Caco-2 (cell line): ENCODE measurements at regions of chr6 and their contacts with region 1.

Region 1: GRCh38 chr6:26537846-26538571 is at the start of gene HMGN4:
- DNase-seq: peak; percentile 85 to 90
- H3K4me3 ChIP-seq: peak within 1 kb of the TSS; percentile 65
- H3K4me3 Mint-ChIP-seq: peak within 1 kb of the TSS; percentile 89
- H3K27ac Mint-ChIP-seq: peak within 1 kb of the TSS; percentile 97
- H3K4me1 ChIP-seq: peaks cover 4% of the 10 kb centered on the region; the same call in 1 of the 2 replicates
- H3K4me1 Mint-ChIP-seq: peaks cover 15% of the 10 kb centered on the region
- H3K27me3 ChIP-seq: no peaks in the 10 kb centered on the region
- H3K27me3 Mint-ChIP-seq: peaks cover 2% of the 10 kb centered on the region
- CTCF ChIP-seq: no peak
- total RNA-seq, gene HMGN4: 29.6 and 30.8 TPM in 2 replicates

Region 2: DNA sequence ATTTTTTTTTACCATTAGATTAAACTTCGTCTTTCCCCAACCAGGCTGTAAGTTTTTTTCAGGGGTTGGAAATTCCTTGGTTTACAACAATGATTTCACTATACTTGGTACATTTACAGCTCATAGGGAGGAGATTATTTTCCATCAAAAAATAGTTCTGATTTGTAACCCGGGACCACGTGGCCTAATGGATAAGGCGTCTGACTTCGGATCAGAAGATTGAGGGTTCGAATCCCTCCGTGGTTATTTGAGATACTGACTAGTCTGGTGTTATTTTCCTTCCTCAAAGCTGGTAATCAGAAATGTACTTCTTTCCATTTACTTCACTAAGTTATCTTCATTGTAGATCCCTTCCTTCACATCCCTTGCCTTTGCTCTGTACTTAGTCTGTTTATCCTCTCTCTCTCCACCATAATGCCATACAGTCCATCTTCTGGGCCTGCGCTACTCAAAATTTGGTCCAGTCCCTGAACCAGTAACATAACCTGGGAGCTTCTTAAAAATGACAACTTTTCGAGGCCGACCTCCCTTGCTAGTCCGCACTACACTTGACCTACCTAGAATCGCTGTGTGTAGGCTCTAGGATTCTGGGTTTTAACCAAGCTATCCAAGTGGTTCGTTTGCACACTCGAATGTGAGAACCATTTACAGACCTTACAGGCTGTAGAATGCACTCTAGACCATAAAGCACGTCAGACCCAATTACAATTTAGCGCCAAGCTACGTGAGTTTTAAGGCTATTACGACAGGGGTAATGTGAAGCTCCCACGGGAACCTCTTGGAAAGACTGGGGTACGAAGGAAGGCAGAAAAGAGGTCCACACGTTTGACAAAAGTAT is 215.1 kb before region 1 on chr6:
- CTCF ChIA-PET with region 1: interaction called, 3 read pairs
- POLR2A ChIA-PET with region 1: no interaction called
- intact Hi-C with region 1: loop called (anchors 10 kb)
- DNase-seq: peak; percentile 72 to 87
- H3K4me3 ChIP-seq: peak overlapping the region; percentile 70
- H3K4me3 Mint-ChIP-seq: peak overlapping the region; percentile 57
- H3K27ac Mint-ChIP-seq: peak overlapping the region; percentile 39
- H3K4me1 ChIP-seq: 0 out of 2 replicates have a peak, but pooled peaks cover 7% of the 10 kb centered on the region
- H3K4me1 Mint-ChIP-seq: peaks cover 26% of the 10 kb centered on the region
- H3K27me3 ChIP-seq: no peaks in the 10 kb centered on the region
- H3K27me3 Mint-ChIP-seq: no peaks in the 10 kb centered on the region
- CTCF ChIP-seq: no peak

Region 3: DNA sequence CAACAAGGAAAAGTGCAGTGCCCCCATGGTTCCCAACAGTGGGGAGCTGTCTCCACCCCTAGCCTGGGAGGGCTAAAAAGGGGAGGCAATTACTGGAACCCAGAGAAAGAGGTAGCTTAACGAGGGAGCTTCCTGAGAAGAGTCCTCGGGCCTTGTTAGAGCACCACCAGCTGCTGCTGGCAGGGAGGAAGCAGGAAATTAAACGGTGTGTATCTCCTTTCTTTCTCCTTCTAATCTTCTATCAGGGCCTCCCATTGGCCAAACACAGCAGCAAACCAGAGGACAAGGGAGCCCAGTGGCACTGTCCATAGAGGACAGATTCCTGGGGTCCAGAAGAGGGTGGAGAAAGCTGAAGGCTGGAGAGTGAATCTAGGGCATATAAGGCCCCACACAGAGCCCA is 162.7 kb before region 1 on chr6:
- CTCF ChIA-PET with region 1: no interaction called
- POLR2A ChIA-PET with region 1: interaction called, 14 read pairs
- intact Hi-C with region 1: no loop called
- DNase-seq: no peak
- H3K4me3 ChIP-seq: no peak overlapping the region
- H3K4me3 Mint-ChIP-seq: no peak overlapping the region
- H3K27ac Mint-ChIP-seq: no peak overlapping the region
- H3K4me1 ChIP-seq: no peaks in the 10 kb centered on the region
- H3K4me1 Mint-ChIP-seq: no peaks in the 10 kb centered on the region
- H3K27me3 ChIP-seq: no peaks in the 10 kb centered on the region
- H3K27me3 Mint-ChIP-seq: no peaks in the 10 kb centered on the region
- CTCF ChIP-seq: no peak

Region 4: GRCh38 chr6:26507658-26508057 is 30.4 kb before region 1 on chr6:
- CTCF ChIA-PET with region 1: no interaction called
- POLR2A ChIA-PET with region 1: no interaction called
- intact Hi-C with region 1: no loop called
- DNase-seq: no peak
- H3K4me3 ChIP-seq: no peak overlapping the region
- H3K4me3 Mint-ChIP-seq: no peak overlapping the region
- H3K27ac Mint-ChIP-seq: no peak overlapping the region
- H3K4me1 ChIP-seq: peaks cover 4% of the 10 kb centered on the region
- H3K4me1 Mint-ChIP-seq: peaks cover 17% of the 10 kb centered on the region
- H3K27me3 ChIP-seq: no peaks in the 10 kb centered on the region
- H3K27me3 Mint-ChIP-seq: no peaks in the 10 kb centered on the region
- CTCF ChIP-seq: no peak

Region 5: DNA sequence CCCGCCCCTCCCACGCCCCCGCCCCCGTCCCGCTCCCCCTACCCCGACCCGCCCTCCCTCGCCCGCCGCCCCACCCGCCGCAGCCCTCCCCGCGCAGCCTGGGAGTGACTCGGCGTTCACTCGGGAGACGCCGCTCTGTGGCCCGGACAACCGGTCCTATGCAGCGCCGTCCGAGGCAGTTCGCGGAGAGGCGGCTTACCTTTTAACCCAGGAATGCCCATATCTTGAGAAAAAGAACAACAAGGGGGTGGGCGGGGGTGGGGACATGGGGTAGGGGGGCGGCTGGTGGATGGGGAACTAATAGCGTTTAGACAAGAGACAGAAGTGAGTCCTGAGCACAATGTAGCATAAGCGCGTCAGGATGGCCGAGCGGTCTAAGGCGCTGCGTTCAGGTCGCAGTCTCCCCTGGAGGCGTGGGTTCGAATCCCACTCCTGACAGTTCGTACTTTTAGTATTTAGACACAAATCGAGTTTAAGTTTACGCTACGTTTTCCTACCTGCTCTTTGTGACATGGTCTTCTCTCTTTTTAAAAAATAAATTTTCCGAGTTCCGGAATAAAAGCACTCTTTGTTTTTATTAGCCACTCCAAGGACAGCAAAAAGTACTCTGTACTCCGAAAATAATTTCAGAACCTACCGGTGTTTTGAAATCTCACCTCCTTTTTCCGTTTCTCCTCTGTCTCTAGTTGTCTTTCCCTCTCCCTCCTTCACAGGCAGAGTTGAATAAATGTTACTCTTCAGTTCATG is 17.0 kb before region 1 on chr6:
- CTCF ChIA-PET with region 1: interaction called, 5 read pairs
- POLR2A ChIA-PET with region 1: interaction called, 9 read pairs
- intact Hi-C with region 1: loop called (anchors 1 kb)
- DNase-seq: peak; percentile 90 to 91
- H3K4me3 ChIP-seq: peak overlapping the region; percentile 94
- H3K4me3 Mint-ChIP-seq: peak overlapping the region; percentile 92
- H3K27ac Mint-ChIP-seq: peak overlapping the region; percentile 96
- H3K4me1 ChIP-seq: peaks cover 10% of the 10 kb centered on the region
- H3K4me1 Mint-ChIP-seq: peaks cover 35% of the 10 kb centered on the region
- H3K27me3 ChIP-seq: no peaks in the 10 kb centered on the region
- H3K27me3 Mint-ChIP-seq: peaks cover 3% of the 10 kb centered on the region
- CTCF ChIP-seq: no peak

Region 6: GRCh38 chr6:26553635-26554446 is 15.8 kb after region 1 on chr6:
- CTCF ChIA-PET with region 1: interaction called, 3 read pairs
- POLR2A ChIA-PET with region 1: interaction called, 3 read pairs
- intact Hi-C with region 1: loop called (anchors 1 kb)
- DNase-seq: peak; percentile 74 to 86
- H3K4me3 ChIP-seq: peak overlapping the region; percentile 55
- H3K4me3 Mint-ChIP-seq: no peak overlapping the region
- H3K27ac Mint-ChIP-seq: no peak overlapping the region
- H3K4me1 ChIP-seq: peaks cover 5% of the 10 kb centered on the region; the same call in 1 of the 2 replicates
- H3K4me1 Mint-ChIP-seq: peaks cover 8% of the 10 kb centered on the region
- H3K27me3 ChIP-seq: no peaks in the 10 kb centered on the region
- H3K27me3 Mint-ChIP-seq: no peaks in the 10 kb centered on the region
- CTCF ChIP-seq: no peak

Region 7: GRCh38 chr6:26568601-26569432 is 30.8 kb after region 1 on chr6:
- CTCF ChIA-PET with region 1: interaction called, 6 read pairs
- POLR2A ChIA-PET with region 1: interaction called, 4 read pairs
- intact Hi-C with region 1: loop called (anchors 1 kb)
- DNase-seq: peak; percentile 90 to 96
- H3K4me3 ChIP-seq: peak overlapping the region; percentile 49
- H3K4me3 Mint-ChIP-seq: peak overlapping the region; percentile 95
- H3K27ac Mint-ChIP-seq: peak overlapping the region; percentile 95
- H3K4me1 ChIP-seq: 0 out of 2 replicates have a peak, but pooled peaks cover 5% of the 10 kb centered on the region
- H3K4me1 Mint-ChIP-seq: peaks cover 22% of the 10 kb centered on the region
- H3K27me3 ChIP-seq: no peaks in the 10 kb centered on the region
- H3K27me3 Mint-ChIP-seq: peaks cover 9% of the 10 kb centered on the region
- CTCF ChIP-seq: peak in 1 of 2 experiments; percentile 31